Lower lobe of right lung (tissue), 2 donors: ENCODE measurements at regions of chr18 and their contacts with region 1.

Region 1: GRCh38 chr18:35949903-35950627 is 22.4 kb upstream of the RMP24 start:
- DNase-seq: peak; percentile 61
- ATAC-seq: peak; percentile 82 to 89
- H3K4me3 ChIP-seq: peak overlapping the region; percentile 54
- H3K27ac ChIP-seq: no peak overlapping the region
- H3K4me1 ChIP-seq: peaks cover 8% of the 10 kb centered on the region
- H3K27me3 ChIP-seq: peaks cover 4% of the 10 kb centered on the region
- CTCF ChIP-seq: peak; percentile 97

Region 2: GRCh38 chr18:35756506-35757117 is 193.5 kb before region 1 on chr18:
- intact Hi-C with region 1: loop called (anchors 10 kb)
- DNase-seq: no peak
- ATAC-seq: peak; percentile 69 to 78
- H3K4me3 ChIP-seq: no peak overlapping the region
- H3K27ac ChIP-seq: no peak overlapping the region
- H3K4me1 ChIP-seq: no peaks in the 10 kb centered on the region
- H3K27me3 ChIP-seq: peaks cover 9% of the 10 kb centered on the region
- CTCF ChIP-seq: peak; percentile 89

Region 3: DNA sequence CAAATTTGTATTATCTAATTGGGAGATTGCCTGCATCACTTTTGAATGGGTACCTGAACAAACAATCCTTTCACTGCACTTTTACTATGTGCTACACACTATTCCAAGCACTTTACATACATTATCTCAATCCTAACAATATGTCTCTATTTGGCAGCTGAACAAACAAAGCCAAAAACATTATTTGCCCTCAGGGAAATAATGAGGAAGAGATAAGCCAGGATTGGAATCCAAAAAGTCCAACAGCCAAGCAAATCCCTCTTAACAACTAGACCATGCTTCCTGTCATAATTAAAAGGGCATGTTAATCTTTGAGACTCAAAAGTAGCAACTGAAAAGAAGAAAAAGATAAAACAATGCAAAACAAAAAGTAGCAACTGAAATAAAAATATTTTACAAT is 85.2 kb after region 1 on chr18:
- intact Hi-C with region 1: no loop called
- DNase-seq: no peak
- ATAC-seq: no peak
- H3K4me3 ChIP-seq: no peak overlapping the region
- H3K27ac ChIP-seq: no peak overlapping the region
- H3K4me1 ChIP-seq: peaks cover 9% of the 10 kb centered on the region
- H3K27me3 ChIP-seq: no peaks in the 10 kb centered on the region
- CTCF ChIP-seq: no peak